SK-MEL-5 (cell line): ENCODE measurements at regions of chr17 and their contacts with region 1.

Region 1: GRCh38 chr17:59435238-59435637 is 103.8 kb downstream of the YPEL2 start:
- DNase-seq: no peak

Region 2: DNA sequence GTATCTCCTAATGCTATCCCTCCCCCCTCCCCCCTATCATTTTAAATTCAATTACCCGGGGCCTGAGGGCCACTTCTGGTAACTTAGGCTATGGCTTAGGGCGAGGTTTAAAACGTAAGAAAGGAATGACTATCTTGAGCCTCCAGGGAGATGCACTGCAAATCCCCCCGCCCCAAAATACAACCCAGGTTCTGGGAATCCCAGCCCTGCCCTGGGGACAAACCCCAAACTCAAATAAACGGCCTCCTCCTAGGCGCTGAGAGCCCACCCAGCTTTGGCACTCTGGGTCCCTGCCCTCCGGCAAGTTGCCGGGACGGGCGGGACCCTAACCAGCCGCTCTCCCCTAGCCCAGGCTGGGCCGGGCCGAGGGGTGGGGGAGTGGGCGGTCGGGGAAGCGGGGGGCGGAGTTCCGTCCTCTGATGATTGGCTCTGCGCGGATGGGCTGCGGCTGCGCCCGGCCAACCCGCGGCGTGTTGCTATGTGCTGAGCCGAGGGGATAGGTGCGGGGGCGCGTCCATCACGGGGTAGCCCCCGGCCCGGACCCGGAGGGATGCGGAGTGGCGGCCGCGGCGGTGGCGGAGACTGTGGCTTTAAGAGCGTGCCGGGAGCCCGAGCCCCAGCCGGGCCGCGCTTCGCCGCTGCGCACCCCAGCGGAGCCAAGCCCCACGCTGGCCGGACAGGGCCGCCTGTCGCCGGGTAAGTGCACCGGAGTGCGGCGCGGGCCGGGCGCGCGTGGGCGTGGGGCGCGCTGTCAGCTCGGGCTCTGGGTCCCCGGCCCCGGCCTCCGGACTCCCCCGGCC is 103.9 kb before region 1 on chr17 and contains the start of gene YPEL2:
- in situ Hi-C with region 1: loop called (anchors 10 kb)
- DNase-seq: peak; percentile 96
- total RNA-seq, gene YPEL2: 16.1 and 17.5 TPM in 2 replicates

Region 3: DNA sequence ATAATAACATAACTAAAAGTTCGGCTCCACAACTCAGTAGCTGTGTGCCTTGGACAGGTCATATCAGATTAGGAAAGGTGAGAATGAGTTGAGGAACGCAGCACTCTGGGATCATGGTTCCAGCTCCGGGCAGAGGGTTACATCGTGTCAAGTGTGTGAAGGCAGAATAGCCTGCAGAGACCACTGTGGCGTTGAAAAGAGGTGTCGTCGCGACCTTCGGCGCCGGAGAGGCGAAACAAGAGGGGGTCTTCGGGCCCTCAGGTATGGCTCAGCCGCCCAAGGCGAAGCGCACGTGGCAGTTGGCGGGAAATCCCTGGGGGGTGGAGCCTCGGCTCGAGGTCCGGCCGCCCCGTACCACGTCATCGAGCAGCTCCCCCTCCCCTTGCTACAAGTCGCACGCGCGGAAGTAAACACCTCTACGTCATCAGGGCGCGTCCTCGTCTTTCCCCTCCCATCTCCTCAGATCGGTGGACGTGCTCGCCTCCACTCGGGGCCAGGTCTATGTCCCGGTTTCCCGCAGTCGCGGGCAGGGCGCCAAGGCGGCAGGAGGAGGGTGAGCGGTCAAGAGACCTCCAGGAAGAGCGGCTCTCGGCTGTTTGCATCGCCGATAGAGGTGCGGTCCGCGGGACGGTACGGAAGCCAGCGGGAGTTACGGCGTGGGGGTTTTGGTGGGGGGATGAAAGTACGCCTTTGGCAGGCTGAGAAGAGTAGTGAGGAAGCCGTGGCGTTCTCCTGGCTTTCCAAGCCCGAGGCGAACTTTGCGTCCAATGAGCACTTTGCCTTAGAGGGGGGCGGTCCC is 130.1 kb after region 1 on chr17 and contains the start of gene DHX40:
- in situ Hi-C with region 1: no loop called
- DNase-seq: peak; percentile 98
- total RNA-seq, gene DHX40: 144 and 151 TPM in 2 replicates